Natural killer cell (primary cell): ENCODE measurements at regions of chr7 and their contacts with region 1.

Region 1: GRCh38 chr7:5396999-5397663 is 26.5 kb downstream of the TNRC18 start:
- DNase-seq: peak; percentile 90 to 97
- ATAC-seq: peak; percentile 91 to 97 (median 93)
- H3K4me3 ChIP-seq: peak overlapping the region; percentile 94
- H3K4me3 Mint-ChIP-seq: peak overlapping the region; percentile 82
- H3K27ac ChIP-seq: peak overlapping the region; percentile 97
- H3K27ac Mint-ChIP-seq: peak overlapping the region; percentile 96 to 98
- H3K4me1 ChIP-seq: peaks cover 49% of the 10 kb centered on the region
- H3K4me1 Mint-ChIP-seq: peaks cover 36 to 48% of the 10 kb centered on the region in 2 donors
- H3K27me3 ChIP-seq: no peaks in the 10 kb centered on the region
- H3K27me3 Mint-ChIP-seq: no peaks in the 10 kb centered on the region
- CTCF ChIP-seq: no peak

Region 2: GRCh38 chr7:5332579-5332978 is 64.6 kb before region 1 on chr7:
- intact Hi-C with region 1: loop called (anchors 1 kb)
- DNase-seq: no peak
- ATAC-seq: no peak
- H3K4me3 ChIP-seq: no peak overlapping the region
- H3K4me3 Mint-ChIP-seq: no peak overlapping the region
- H3K27ac ChIP-seq: no peak overlapping the region
- H3K27ac Mint-ChIP-seq: no peak overlapping the region
- H3K4me1 ChIP-seq: peaks cover 35% of the 10 kb centered on the region
- H3K4me1 Mint-ChIP-seq: peaks cover 15 to 32% of the 10 kb centered on the region in 2 donors
- H3K27me3 ChIP-seq: no peaks in the 10 kb centered on the region
- H3K27me3 Mint-ChIP-seq: no peaks in the 10 kb centered on the region
- CTCF ChIP-seq: no peak

Region 3: GRCh38 chr7:5441840-5442503 is 44.8 kb after region 1 on chr7:
- intact Hi-C with region 1: no loop called
- DNase-seq: no peak
- ATAC-seq: no peak
- H3K4me3 ChIP-seq: no peak overlapping the region
- H3K4me3 Mint-ChIP-seq: no peak overlapping the region
- H3K27ac ChIP-seq: no peak overlapping the region
- H3K27ac Mint-ChIP-seq: no peak overlapping the region
- H3K4me1 ChIP-seq: no peaks in the 10 kb centered on the region
- H3K4me1 Mint-ChIP-seq: no peaks in the 10 kb centered on the region
- H3K27me3 ChIP-seq: no peaks in the 10 kb centered on the region
- H3K27me3 Mint-ChIP-seq: no peaks in the 10 kb centered on the region
- CTCF ChIP-seq: no peak